RWPE1 (cell line): ENCODE measurements at regions of chr6 and their contacts with region 1.

Region 1: DNA sequence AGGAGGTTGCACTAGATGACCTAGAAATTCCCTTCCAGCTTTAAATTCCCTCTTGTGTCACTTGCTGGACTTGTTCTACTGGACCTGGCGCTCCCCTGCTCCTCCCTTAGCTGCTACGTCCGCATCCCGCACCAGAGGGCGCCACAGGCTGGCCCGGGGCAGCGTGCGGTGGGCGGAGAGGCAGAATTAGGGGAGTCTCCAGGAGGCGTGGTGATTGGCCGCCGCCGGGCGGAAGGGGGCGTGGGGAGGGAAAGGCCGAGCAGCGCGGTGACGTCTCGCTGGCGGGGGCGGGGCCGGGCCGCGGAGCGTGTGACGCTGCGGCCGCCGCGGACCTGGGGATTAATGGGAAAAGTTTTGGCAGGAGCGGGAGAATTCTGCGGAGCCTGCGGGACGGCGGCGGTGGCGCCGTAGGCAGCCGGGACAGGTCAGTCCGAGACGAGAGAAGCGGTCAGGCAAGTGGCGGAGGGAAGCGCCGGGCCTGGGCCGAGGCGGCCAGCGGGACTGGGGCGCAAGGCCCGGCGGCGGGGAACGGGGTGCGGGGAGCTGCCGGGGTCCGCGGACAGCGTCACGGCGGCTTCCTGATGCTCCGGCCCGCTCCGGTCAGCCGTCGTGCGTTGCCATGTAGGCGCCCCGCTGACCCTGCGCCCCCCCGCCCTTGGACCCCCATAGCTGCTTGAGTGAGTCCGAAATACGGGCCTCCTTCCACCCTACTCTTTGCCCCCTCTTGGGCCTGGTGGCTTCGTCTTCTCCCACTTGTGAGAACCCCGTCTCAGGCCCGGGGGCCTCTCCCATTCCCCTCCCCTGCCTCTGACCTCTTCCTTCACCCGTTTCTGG is at the start of gene PPARD:
- DNase-seq: peak; percentile 99
- H3K27ac ChIP-seq: peak within 1 kb of the TSS; percentile 78
- CTCF ChIP-seq: peak; percentile 97

Region 2: DNA sequence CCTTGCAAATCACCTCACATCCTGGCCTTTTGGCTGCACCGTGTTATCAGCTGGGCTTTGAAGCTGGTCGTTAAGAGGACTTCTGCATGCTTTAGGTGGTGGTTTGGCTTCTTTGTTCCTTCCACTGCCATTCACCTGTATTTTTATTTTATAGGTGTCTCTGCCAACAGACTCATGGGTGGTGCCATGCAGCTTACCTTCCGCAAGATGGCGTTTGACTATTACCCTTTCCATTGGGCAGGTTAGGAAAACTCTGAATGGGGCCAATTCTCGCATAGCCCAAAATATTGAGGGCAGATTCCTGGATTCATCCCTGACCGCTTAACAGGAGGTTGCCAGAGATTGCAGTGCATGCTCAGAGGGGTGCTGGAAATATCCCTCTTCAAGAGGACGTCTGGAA is 487.0 kb before region 1 on chr6:
- CTCF ChIA-PET with region 1: no interaction called
- POLR2A ChIA-PET with region 1: no interaction called
- DNase-seq: no peak
- H3K27ac ChIP-seq: no peak overlapping the region
- CTCF ChIP-seq: no peak

Region 3: GRCh38 chr6:35452186-35453090 is 110.0 kb after region 1 on chr6 and contains the start of gene FANCE:
- CTCF ChIA-PET with region 1: interaction called, 41 read pairs
- POLR2A ChIA-PET with region 1: no interaction called
- DNase-seq: peak; percentile 92
- H3K27ac ChIP-seq: peak within 1 kb of the TSS; percentile 86
- CTCF ChIP-seq: no peak

Region 4: GRCh38 chr6:35485402-35485877 is 143.0 kb after region 1 on chr6:
- CTCF ChIA-PET with region 1: no interaction called
- POLR2A ChIA-PET with region 1: no interaction called
- DNase-seq: peak; percentile 91
- H3K27ac ChIP-seq: peak overlapping the region; percentile 99
- CTCF ChIP-seq: no peak

Region 5: DNA sequence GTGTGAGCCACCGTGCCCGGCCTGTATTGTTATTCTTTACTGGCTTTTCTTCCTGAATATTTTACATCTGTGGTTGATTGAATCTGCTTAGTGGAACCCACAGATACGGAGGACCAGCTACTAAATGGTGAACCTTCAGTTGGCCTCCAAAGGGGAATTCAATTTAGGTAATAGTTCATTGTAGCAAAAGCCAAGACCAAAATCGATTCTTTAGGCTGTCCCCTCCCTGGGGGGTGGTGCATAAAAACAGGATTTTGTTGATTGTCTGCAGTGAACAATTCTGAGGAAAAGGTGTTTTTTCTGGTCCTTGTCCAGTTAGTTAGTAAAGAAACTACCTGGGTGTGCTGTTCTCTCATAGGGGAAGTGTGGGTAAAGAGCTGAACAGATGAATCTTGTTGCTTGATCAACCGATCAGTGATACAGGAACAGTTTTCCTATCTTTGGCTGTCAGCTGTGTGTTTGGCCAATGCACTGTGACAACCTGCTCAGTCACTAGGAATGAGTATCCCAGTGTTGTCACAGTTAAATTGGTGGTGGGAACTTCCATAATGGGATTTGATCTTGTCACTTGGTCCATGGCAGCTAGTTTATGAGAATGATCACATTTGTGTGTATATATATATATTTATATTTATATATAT is 482.2 kb after region 1 on chr6:
- CTCF ChIA-PET with region 1: no interaction called
- POLR2A ChIA-PET with region 1: no interaction called
- DNase-seq: no peak
- H3K27ac ChIP-seq: no peak overlapping the region
- CTCF ChIP-seq: no peak